Common myeloid progenitor, CD34-positive (primary cell): ENCODE measurements at regions of chr3 and their contacts with region 1.

Region 1: DNA sequence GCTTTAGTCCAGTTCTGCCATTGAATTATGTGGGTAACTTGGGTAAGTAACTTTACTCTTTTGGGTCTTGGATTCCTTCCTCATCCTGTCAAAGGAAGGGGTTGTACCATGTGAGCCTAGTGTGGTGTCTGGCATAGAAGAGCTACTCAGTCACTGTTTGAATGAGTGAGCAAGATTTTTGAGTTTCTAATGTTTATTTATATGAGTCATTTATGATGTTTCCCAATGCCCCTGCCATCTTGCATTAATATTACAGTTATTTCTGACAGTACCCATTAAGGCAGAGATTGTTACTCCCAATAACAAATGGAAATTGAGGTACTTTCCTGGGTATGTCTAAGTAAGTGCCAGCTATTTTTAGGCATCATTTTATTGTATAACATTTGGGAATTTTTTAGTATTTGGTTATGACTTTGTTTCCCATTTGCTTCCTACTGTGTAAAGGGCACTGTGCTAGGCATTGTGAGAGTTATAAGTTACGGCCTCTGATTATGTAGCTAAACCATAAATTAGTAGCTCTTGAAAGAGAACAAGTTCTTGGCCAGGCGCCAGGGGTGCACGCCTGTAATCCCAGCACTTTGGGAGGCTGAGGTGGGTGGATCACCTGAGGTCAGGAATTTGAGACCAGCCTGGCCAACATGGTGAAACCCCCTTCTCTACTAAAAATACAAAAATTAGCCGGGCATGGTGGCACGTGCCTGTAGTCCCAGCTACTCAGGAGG is 23.5 kb downstream of the NR1D2 start:
- DNase-seq: no peak
- H3K4me3 ChIP-seq: no peak overlapping the region
- H3K27ac ChIP-seq: no peak overlapping the region
- H3K4me1 ChIP-seq: no peaks in the 10 kb centered on the region
- H3K27me3 ChIP-seq: no peaks in the 10 kb centered on the region

Region 2: GRCh38 chr3:23981955-23982354 is 13.3 kb after region 1 on chr3:
- CTCF ChIA-PET with region 1: interaction called, 20 read pairs
- POLR2A ChIA-PET with region 1: interaction called, 5 read pairs
- DNase-seq: no peak
- H3K4me3 ChIP-seq: no peak overlapping the region
- H3K27ac ChIP-seq: no peak overlapping the region
- H3K4me1 ChIP-seq: peaks cover 0 to 7% (median 3%) of the 10 kb centered on the region in 4 experiments
- H3K27me3 ChIP-seq: no peaks in the 10 kb centered on the region

Region 3: GRCh38 chr3:24042174-24043059 is 73.8 kb after region 1 on chr3:
- CTCF ChIA-PET with region 1: no interaction called
- POLR2A ChIA-PET with region 1: no interaction called
- DNase-seq: no peak
- H3K4me3 ChIP-seq: peak overlapping the region in 1 of 7 experiments; percentile 29
- H3K27ac ChIP-seq: no peak overlapping the region
- H3K4me1 ChIP-seq: peaks cover 4 to 29% (median 13%) of the 10 kb centered on the region in 4 experiments
- H3K27me3 ChIP-seq: no peaks in the 10 kb centered on the region

Region 4: GRCh38 chr3:24060055-24060454 is 91.4 kb after region 1 on chr3:
- CTCF ChIA-PET with region 1: no interaction called
- POLR2A ChIA-PET with region 1: no interaction called
- DNase-seq: no peak
- H3K4me3 ChIP-seq: no peak overlapping the region
- H3K27ac ChIP-seq: no peak overlapping the region
- H3K4me1 ChIP-seq: no peaks in the 10 kb centered on the region
- H3K27me3 ChIP-seq: no peaks in the 10 kb centered on the region